ENCODE measurements at regions of chr4 and their contacts with region 1.

Region 1: DNA sequence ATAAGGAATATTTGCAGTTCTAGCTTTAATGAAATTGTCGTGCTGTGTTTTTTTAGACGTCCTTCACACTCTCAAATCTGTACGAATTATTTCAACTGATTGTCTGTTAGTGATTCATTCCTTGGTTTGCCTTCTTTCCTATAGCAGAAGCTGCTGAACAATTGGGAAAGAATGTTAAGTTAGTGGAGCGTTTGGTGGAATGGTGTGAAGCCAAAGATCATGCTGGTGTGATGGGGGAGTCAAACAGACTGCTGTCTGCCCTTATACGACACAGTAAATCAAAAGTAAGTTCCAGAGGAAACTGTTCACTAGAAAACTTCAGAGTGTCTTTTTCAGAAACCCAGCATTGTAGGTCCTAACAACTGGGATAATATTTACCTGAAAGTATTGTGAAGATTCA is 159.9 kb downstream of the RAP1GDS1 start:
- DNase-seq: no peak

Region 2: GRCh38 chr4:98394134-98394533 is 27.0 kb before region 1 on chr4:
- intact Hi-C with region 1: no loop called
- DNase-seq: no peak

Region 3: GRCh38 chr4:99008051-99008450 is 586.9 kb after region 1 on chr4:
- intact Hi-C with region 1: loop called in 1 of 2 experiments (anchors 5 kb)
- DNase-seq: no peak

Measured in posterior vena cava (tissue), 2 donors.